Heart left ventricle (tissue), 16 donors: ENCODE measurements at regions of chr4 and their contacts with region 1.

Region 1: DNA sequence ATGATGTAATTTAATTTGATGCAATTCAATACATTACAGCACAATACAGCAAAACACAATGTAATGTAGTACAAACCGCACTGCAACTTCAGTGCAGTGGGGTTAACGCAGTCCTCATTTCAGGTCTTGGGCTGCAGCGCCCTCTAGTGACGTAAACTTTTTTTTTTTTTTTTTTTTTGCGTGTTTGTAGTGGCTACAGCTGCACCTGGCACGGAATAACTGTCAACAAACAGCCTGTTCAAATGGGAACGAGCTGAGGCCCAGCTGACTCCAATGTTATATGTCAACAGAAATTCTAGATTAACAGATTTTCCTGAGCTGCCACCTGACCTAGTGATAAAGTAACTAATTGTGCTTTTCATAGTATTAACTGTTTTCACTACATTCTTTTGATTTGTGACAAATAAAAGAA is 33.5 kb upstream of the RASSF6 start:
- DNase-seq: no peak
- ATAC-seq: peak in 3 of 4 donors; percentile 24 to 50 (median 46)
- H3K4me3 ChIP-seq: no peak overlapping the region
- H3K27ac ChIP-seq: no peak overlapping the region
- H3K4me1 ChIP-seq: peaks cover 0 to 5% (median 0%) of the 10 kb centered on the region in 12 donors
- H3K27me3 ChIP-seq: peaks cover 0 to 12% (median 0%) of the 10 kb centered on the region in 9 donors
- CTCF ChIP-seq: peak; percentile 43 to 76 (median 66)
- POLR2A ChIP-seq: no peak

Region 2: DNA sequence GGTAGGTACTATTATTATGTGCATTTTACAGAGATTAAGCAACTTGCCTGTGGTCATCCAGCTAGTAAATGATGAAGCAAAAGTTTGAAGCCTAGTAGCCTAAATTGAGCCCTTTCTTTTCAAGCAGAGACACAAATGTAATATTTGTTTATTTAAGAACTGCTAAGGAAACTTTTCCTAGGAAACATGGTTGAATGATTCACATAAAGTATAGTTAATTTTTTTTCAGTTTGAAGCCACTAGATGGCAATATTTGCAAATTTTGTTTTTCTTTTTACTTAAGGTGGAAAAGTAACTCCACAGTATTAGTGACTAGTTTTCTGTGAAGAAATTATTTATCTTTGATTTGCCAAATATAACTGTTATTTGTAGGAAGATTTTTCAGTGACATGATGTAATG is 342.3 kb before region 1 on chr4:
- intact Hi-C with region 1: loop called (anchors 2 to 10 kb)
- DNase-seq: no peak
- ATAC-seq: no peak
- H3K4me3 ChIP-seq: no peak overlapping the region
- H3K27ac ChIP-seq: no peak overlapping the region
- H3K4me1 ChIP-seq: no peaks in the 10 kb centered on the region
- H3K27me3 ChIP-seq: no peaks in the 10 kb centered on the region
- CTCF ChIP-seq: peak in 11 of 12 donors; percentile 14 to 55 (median 36)
- POLR2A ChIP-seq: no peak

Region 3: GRCh38 chr4:73341454-73341853 is 312.2 kb before region 1 on chr4:
- intact Hi-C with region 1: loop called in 4 of 10 experiments (anchors 5 to 10 kb)
- DNase-seq: no peak
- ATAC-seq: peak in 2 of 4 donors; percentile 39 to 42
- H3K4me3 ChIP-seq: no peak overlapping the region
- H3K27ac ChIP-seq: no peak overlapping the region
- H3K4me1 ChIP-seq: no peaks in the 10 kb centered on the region
- H3K27me3 ChIP-seq: peaks cover 0 to 3% (median 0%) of the 10 kb centered on the region in 9 donors
- CTCF ChIP-seq: peak in 7 of 12 donors; percentile 20 to 52 (median 39)
- POLR2A ChIP-seq: no peak

Region 4: DNA sequence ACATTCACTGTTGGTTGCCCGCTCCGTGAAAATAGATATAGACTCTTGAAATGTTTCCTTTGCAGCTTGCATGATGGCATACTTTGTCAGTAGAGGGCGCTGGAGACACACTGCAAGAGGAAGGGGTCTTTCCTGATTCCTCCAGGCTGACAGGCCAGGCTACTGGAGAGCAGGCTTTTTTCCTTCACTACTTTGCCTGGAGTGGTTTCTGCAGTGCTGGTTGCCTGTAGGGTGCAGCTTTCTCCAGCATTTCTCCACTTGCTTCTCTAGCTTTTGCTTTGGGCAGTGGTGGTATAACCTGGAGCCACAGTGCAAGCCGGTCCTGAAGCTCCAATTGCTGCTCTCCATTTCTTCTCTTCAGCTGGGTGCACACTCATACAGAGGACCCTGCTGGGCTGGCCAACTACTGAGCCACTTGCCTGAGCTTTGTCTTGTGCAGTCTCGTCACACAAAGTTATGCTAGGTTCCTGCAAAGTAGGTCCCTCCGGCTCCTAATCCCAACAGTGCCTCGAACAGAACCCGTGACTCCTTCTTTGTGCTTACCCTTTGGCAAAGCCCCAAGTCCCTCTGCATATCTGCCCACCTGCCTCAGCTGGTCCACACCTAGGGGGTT is 79.8 kb before region 1 on chr4:
- intact Hi-C with region 1: loop called in 1 of 10 experiments (anchors 5 kb)
- DNase-seq: peak in 3 of 5 donors; percentile 23 to 30 (median 26)
- ATAC-seq: peak in 3 of 4 donors; percentile 34 to 39 (median 34)
- H3K4me3 ChIP-seq: no peak overlapping the region
- H3K27ac ChIP-seq: no peak overlapping the region
- H3K4me1 ChIP-seq: no peaks in the 10 kb centered on the region
- H3K27me3 ChIP-seq: peaks cover 0 to 4% (median 0%) of the 10 kb centered on the region in 9 donors
- CTCF ChIP-seq: peak; percentile 26 to 67 (median 50)
- POLR2A ChIP-seq: no peak

Region 5: GRCh38 chr4:73593631-73594241 is 60.0 kb before region 1 on chr4:
- intact Hi-C with region 1: loop called in 4 of 10 experiments (anchors 5 to 10 kb)
- DNase-seq: no peak
- ATAC-seq: no peak
- H3K4me3 ChIP-seq: no peak overlapping the region
- H3K27ac ChIP-seq: no peak overlapping the region
- H3K4me1 ChIP-seq: no peaks in the 10 kb centered on the region
- H3K27me3 ChIP-seq: no peaks in the 10 kb centered on the region
- CTCF ChIP-seq: peak in 11 of 12 donors; percentile 7 to 60 (median 45)
- POLR2A ChIP-seq: no peak